WTC11 (cell line): ENCODE measurements at regions of chr17 and their contacts with region 1.

Region 1: GRCh38 chr17:2776589-2777241 is 19.5 kb upstream of the RAP1GAP2 start:
- DNase-seq: peak; percentile 76
- ATAC-seq: peak; percentile 71
- H3K4me3 Mint-ChIP-seq: peak overlapping the region; percentile 89
- H3K27ac Mint-ChIP-seq: no peak overlapping the region
- H3K4me1 Mint-ChIP-seq: peaks cover 7% of the 10 kb centered on the region
- H3K27me3 Mint-ChIP-seq: peaks cover 19% of the 10 kb centered on the region
- CTCF ChIP-seq: no peak

Region 2: DNA sequence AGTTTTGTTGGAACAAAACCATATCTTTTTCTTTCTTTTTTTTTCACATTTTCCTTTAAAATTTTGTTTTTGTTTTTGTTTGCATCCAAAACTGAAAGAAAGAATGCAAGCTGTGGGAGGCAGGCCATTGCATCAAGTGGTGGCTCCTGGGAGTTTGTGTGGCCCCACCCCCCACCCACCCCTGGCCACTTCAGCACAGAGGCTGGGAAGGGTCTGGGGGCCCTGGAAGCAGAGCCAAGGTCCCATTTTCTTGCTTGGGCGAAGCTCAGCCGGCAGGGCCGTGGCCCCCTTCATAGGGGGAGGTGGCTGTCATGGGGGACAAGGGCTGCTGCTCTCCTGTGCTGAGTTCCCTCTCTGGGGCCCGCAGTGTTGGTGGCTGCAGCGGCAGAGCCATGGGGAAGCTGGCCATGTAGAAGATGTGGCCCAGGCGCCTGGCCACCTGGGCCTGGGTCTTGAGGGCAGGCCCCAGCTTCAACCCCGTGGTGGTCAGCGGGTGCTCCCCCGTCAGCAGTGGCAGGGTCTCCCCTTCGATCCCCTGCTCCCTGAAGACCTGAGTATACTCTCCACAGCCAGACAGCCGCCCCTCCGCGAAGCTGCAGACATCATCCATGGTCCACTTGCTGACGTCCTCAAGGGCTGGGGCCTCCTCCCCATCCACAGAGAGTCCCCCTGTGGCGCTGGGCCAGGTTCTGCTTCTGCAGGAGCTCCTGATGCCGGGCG is 163.5 kb before region 1 on chr17:
- CTCF ChIA-PET with region 1: no interaction called
- POLR2A ChIA-PET with region 1: no interaction called
- DNase-seq: no peak
- ATAC-seq: no peak
- H3K4me3 Mint-ChIP-seq: no peak overlapping the region
- H3K27ac Mint-ChIP-seq: no peak overlapping the region
- H3K4me1 Mint-ChIP-seq: peaks cover 28% of the 10 kb centered on the region
- H3K27me3 Mint-ChIP-seq: no peaks in the 10 kb centered on the region
- CTCF ChIP-seq: no peak

Region 3: DNA sequence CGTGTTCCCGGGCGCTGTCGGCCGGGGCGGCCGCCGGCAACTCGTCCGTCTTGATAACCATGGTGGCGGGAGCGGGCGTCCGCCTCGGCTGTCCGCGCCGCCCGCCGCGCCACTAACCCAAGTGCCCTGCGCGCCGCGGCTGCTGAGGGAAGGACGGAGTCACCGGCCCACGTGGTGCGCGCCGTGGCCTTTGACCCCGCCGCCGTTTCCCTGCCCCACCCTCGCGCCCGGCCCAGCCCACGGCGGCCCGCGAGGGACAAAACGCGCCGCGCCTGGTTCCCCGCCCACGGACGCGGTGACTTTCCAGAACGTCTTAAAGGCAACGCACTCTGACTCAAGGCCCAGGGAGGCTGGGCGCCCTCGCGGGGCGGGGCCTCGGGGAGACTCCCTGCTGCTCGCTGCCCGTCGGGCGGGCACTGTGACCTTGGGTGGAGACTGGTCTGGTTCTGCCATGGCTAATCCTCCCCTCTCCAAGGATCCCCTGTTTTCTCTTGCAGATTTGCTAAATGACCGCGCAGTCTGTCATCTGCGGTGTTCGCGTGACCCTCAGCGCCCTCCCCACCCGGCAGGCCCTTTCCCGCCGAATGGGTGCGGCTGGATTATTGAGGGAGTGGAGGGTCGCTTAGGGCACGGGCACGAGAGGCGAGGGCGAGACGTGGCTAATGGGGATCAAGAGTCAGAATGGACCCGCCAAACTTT is 65.0 kb before region 1 on chr17 and contains the start of gene CLUH:
- CTCF ChIA-PET with region 1: interaction called, 10 read pairs
- POLR2A ChIA-PET with region 1: no interaction called
- DNase-seq: peak; percentile 62
- ATAC-seq: peak; percentile 38
- H3K4me3 Mint-ChIP-seq: peak within 1 kb of the TSS; percentile 76
- H3K27ac Mint-ChIP-seq: peak within 1 kb of the TSS; percentile 88
- H3K4me1 Mint-ChIP-seq: peaks cover 36% of the 10 kb centered on the region
- H3K27me3 Mint-ChIP-seq: peaks cover 7% of the 10 kb centered on the region
- CTCF ChIP-seq: no peak
- total RNA-seq, gene CLUH: 79.8 to 105 TPM (median 83.1 TPM) in 3 replicates

Region 4: GRCh38 chr17:2724778-2725164 is 51.9 kb before region 1 on chr17:
- CTCF ChIA-PET with region 1: interaction called, 36 read pairs
- POLR2A ChIA-PET with region 1: interaction called, 4 read pairs
- DNase-seq: peak; percentile 73
- ATAC-seq: peak; percentile 58
- H3K4me3 Mint-ChIP-seq: peak overlapping the region; percentile 50
- H3K27ac Mint-ChIP-seq: no peak overlapping the region
- H3K4me1 Mint-ChIP-seq: peaks cover 25% of the 10 kb centered on the region
- H3K27me3 Mint-ChIP-seq: peaks cover 8% of the 10 kb centered on the region
- CTCF ChIP-seq: no peak

Region 5: GRCh38 chr17:2749784-2750181 is 26.9 kb before region 1 on chr17:
- CTCF ChIA-PET with region 1: interaction called, 14 read pairs
- POLR2A ChIA-PET with region 1: no interaction called
- DNase-seq: peak; percentile 90
- ATAC-seq: peak; percentile 88
- H3K4me3 Mint-ChIP-seq: peak overlapping the region; percentile 45
- H3K27ac Mint-ChIP-seq: no peak overlapping the region
- H3K4me1 Mint-ChIP-seq: peaks cover 28% of the 10 kb centered on the region
- H3K27me3 Mint-ChIP-seq: peaks cover 22% of the 10 kb centered on the region
- CTCF ChIP-seq: no peak

Region 6: DNA sequence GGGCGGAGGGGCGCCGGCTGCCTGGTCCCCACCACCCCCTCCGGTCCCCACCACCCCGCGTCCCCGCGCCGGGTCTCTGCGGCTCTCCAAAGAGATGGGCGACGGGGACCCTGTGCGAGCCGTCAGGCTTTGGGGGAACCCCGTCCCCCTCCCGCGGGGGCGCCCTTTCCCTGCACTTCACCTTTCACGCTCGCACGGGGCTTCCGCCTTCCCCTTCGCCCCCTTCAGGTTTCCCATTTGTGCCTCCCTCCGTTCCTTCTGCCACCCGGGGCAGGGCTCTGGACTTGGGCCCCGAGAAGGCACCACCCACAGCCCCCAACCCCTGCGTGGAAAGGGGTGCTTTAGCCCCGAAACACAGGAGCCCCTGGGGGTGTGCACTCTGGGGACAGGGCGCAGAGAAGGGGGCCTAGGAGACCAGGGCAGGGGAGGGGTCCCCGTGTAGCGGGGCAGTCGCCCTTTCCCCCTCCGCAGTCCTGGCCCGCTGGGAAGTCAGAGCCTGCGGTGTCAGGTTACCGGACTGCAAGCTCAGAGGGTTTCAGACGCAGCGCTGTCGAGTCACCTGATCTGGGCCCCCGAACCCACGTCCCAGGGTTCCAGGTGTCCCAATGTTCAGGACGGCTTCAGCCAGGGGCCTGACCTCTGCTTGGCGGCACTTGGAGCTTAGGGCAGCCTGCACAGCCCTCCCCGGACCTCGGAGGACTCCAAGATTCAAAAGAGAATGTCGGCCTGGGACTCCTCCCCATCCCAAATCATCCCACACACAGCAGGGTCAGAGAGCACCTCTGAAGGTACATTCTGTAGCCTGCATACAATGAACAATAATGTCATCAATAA is 20.6 kb before region 1 on chr17:
- CTCF ChIA-PET with region 1: interaction called, 14 read pairs
- POLR2A ChIA-PET with region 1: interaction called, 3 read pairs
- DNase-seq: peak; percentile 82
- ATAC-seq: peak; percentile 87
- H3K4me3 Mint-ChIP-seq: peak overlapping the region; percentile 75
- H3K27ac Mint-ChIP-seq: peak overlapping the region; percentile 91; the same call in 1 of the 2 replicates
- H3K4me1 Mint-ChIP-seq: peaks cover 17% of the 10 kb centered on the region
- H3K27me3 Mint-ChIP-seq: peaks cover 37% of the 10 kb centered on the region
- CTCF ChIP-seq: no peak

Region 7: GRCh38 chr17:2796164-2797125 is 19.7 kb after region 1 on chr17 and contains the start of gene RAP1GAP2:
- CTCF ChIA-PET with region 1: interaction called, 16 read pairs
- POLR2A ChIA-PET with region 1: no interaction called
- DNase-seq: no peak
- ATAC-seq: no peak
- H3K4me3 Mint-ChIP-seq: no peak within 1 kb of the TSS
- H3K27ac Mint-ChIP-seq: peak within 1 kb of the TSS; percentile 60; the same call in 1 of the 2 replicates
- H3K4me1 Mint-ChIP-seq: peaks cover 17% of the 10 kb centered on the region
- H3K27me3 Mint-ChIP-seq: no peaks in the 10 kb centered on the region
- CTCF ChIP-seq: no peak
- total RNA-seq, gene RAP1GAP2: 64.5 to 72.8 TPM (median 65.4 TPM) in 3 replicates

Region 8: DNA sequence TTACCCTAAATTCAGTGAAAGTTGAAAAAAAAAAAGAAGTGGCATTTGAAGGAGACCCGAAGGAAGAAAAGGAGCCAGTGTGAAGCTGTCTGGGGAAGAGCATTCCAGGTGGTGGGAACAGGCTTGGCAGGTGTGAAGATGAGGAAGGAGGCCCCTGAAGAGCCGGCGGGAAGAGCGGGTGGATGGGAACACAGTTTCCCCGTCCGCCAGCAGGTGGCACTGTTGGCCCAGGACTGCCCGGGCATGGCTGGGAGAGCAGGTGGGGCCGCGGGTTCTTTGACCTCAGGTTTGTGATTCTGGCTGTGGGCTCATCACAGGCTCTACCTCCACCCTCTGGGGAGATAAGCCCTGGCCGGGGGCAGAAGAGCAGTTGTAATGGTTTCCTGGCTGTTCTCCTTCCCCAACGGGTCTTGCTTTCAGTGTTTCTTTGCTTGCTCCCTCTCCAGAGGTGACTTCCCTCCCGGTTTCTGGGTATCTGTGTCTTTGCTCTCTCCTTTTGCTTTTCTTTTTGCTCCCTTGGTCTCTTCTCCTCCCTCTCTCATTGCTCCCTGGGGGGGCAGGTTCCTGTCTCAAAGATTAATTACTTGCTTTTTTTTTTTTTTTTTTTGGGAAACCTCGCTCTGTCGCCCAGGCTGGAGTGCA is 51.8 kb after region 1 on chr17:
- CTCF ChIA-PET with region 1: interaction called, 10 read pairs
- POLR2A ChIA-PET with region 1: interaction called, 3 read pairs
- DNase-seq: peak; percentile 95
- ATAC-seq: peak; percentile 91
- H3K4me3 Mint-ChIP-seq: no peak overlapping the region
- H3K27ac Mint-ChIP-seq: no peak overlapping the region
- H3K4me1 Mint-ChIP-seq: peaks cover 11% of the 10 kb centered on the region
- H3K27me3 Mint-ChIP-seq: no peaks in the 10 kb centered on the region
- CTCF ChIP-seq: peak; percentile 94

Region 9: DNA sequence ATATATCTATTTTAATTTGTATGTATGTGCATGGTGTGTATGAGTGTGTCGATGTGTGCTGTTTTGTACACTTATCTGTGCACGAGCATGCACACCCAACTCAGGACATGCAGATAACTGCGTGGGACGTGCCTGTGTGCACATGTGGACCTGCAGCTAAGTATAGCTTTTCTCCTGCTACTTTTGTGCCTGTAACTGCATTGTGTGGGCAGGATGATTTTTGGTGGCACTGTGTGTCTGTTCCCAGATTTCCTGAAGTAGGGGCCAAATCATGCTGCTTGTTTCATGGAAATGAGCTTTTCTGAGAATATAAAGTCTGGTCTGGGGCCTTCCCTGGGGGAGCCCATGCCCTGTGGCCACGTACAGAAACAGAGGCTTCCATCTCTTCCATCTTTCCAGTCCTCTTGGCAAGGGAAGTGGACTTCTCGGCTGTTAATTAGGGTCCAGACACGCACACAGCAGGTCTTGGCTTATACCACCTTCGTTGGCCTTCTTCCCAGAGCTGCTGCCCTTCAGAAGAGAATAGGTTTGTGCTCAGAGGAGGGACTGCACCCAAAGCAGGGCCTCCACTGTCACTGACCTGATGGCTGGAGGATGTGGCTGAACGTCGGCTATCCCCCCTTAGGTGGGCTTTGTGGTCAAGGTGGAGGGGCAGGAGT is 1687.2 kb after region 1 on chr17:
- CTCF ChIA-PET with region 1: no interaction called
- POLR2A ChIA-PET with region 1: no interaction called
- DNase-seq: no peak
- ATAC-seq: no peak
- H3K4me3 Mint-ChIP-seq: no peak overlapping the region
- H3K27ac Mint-ChIP-seq: no peak overlapping the region
- H3K4me1 Mint-ChIP-seq: no peaks in the 10 kb centered on the region
- H3K27me3 Mint-ChIP-seq: peaks cover 8% of the 10 kb centered on the region; the same call in 1 of the 2 replicates
- CTCF ChIP-seq: no peak